ENCODE measurements at regions of chr14 and their contacts with region 1.

Region 1: GRCh38 chr14:44945264-44945663 is 16.5 kb downstream of the KLHL28 start:
- DNase-seq: no peak
- ATAC-seq: no peak
- H3K4me3 ChIP-seq: no peak overlapping the region
- H3K27ac ChIP-seq: no peak overlapping the region
- H3K4me1 ChIP-seq: no peaks in the 10 kb centered on the region
- H3K27me3 ChIP-seq: no peaks in the 10 kb centered on the region
- CTCF ChIP-seq: no peak
- POLR2A ChIP-seq: no peak

Region 2: GRCh38 chr14:44935155-44935554 is 10.1 kb before region 1 on chr14:
- intact Hi-C with region 1: loop called in 1 of 10 experiments (anchors 2 kb)
- DNase-seq: no peak
- ATAC-seq: no peak
- H3K4me3 ChIP-seq: no peak overlapping the region
- H3K27ac ChIP-seq: no peak overlapping the region
- H3K4me1 ChIP-seq: no peaks in the 10 kb centered on the region
- H3K27me3 ChIP-seq: no peaks in the 10 kb centered on the region
- CTCF ChIP-seq: no peak
- POLR2A ChIP-seq: no peak

Region 3: DNA sequence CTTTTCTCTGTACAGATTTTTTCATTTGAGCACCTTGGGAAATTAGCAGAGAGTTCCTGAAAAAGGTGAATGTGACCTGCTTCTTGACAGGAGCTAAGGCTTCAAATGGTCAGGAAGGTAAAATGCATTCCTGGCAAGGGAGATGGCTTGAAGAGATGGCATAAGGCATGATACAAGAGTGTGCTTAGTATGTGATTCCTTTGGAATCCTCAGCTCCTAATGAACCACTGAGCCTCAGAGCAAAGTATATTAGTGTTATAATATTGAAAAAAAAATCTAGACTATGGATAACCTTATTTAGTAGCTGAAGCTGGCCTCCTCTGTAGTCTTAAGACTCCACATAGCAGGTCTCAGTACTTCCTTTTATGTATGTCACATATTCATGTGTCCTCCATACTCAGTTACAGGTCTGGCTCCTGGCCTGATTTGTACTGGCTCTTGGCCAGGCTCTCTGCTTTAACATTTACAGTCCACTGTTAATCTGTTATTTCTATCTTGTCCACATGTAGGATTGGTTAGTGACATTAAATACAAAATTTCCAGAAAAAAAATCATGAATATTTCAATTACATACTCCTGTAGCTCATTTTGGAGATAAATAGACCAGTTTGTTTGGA is 34.6 kb after region 1 on chr14:
- intact Hi-C with region 1: no loop called
- DNase-seq: peak in 4 of 5 donors; percentile 27 to 65 (median 46)
- ATAC-seq: peak in 3 of 4 donors; percentile 60 to 67 (median 63)
- H3K4me3 ChIP-seq: no peak overlapping the region
- H3K27ac ChIP-seq: peak overlapping the region in 1 of 12 donors; percentile 14
- H3K4me1 ChIP-seq: peaks cover 0 to 32% (median 17%) of the 10 kb centered on the region in 12 donors
- H3K27me3 ChIP-seq: no peaks in the 10 kb centered on the region
- CTCF ChIP-seq: no peak
- POLR2A ChIP-seq: no peak